ENCODE measurements at regions of chr2 and their contacts with region 1.

Region 1: DNA sequence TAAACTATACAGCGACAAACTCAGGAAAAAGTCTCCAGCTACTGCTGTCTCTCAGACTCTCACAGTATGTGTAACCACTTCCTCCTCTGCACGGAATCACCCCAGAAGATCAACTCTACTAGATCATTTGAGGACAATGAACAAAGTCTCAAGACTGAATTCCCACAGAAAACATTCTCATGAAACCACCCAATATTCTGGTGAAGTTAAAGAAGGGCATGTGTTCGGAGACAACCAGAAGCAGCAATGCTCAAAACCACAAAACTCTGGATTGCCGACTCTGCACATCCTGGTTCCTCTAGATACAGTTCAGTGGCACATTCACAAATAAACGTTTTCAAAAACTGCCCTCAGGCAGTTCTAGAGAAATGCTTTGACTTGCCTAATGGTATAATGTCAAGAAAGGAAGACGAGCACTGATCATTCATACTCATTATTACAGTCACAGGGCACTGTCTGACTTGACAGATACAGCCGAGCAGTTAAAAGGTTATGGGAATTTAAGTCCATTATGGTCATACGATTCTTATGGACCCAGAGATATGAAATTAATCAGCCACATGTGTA is 91.9 kb upstream of the STK17B start:
- DNase-seq: no peak
- H3K4me3 ChIP-seq: peak overlapping the region in 1 of 4 donors; percentile 6
- H3K27ac ChIP-seq: peak overlapping the region; percentile 32 to 74 (median 54)
- H3K4me1 ChIP-seq: peaks cover 6 to 42% (median 7%) of the 10 kb centered on the region in 3 donors
- H3K27me3 ChIP-seq: no peaks in the 10 kb centered on the region
- CTCF ChIP-seq: no peak
- POLR2A ChIP-seq: peak in 1 of 4 donors; percentile 33

Region 2: GRCh38 chr2:196171248-196171871 is 91.9 kb before region 1 on chr2 and contains the start of gene STK17B:
- intact Hi-C with region 1: loop called (anchors 5 kb)
- DNase-seq: peak; percentile 70
- H3K4me3 ChIP-seq: peak within 1 kb of the TSS; percentile 70 to 98 (median 83)
- H3K27ac ChIP-seq: peak within 1 kb of the TSS; percentile 90 to 95 (median 92)
- H3K4me1 ChIP-seq: peaks cover 6 to 36% (median 8%) of the 10 kb centered on the region in 3 donors
- H3K27me3 ChIP-seq: no peaks in the 10 kb centered on the region
- CTCF ChIP-seq: peak in 2 of 6 experiments; percentile 19 to 20
- POLR2A ChIP-seq: peak in 3 of 4 donors; percentile 87 to 98 (median 93)
- total RNA-seq, gene STK17B: 7.9 to 32.2 (median 18.2) TPM

Region 3: GRCh38 chr2:196370381-196370780 is 107.1 kb after region 1 on chr2:
- intact Hi-C with region 1: no loop called
- DNase-seq: no peak
- H3K4me3 ChIP-seq: no peak overlapping the region
- H3K27ac ChIP-seq: no peak overlapping the region
- H3K4me1 ChIP-seq: no peaks in the 10 kb centered on the region
- H3K27me3 ChIP-seq: no peaks in the 10 kb centered on the region
- CTCF ChIP-seq: no peak
- POLR2A ChIP-seq: no peak

Measured in esophagus squamous epithelium (tissue), 5 donors.